ENCODE measurements at regions of chr2 and their contacts with region 1.

Region 1: DNA sequence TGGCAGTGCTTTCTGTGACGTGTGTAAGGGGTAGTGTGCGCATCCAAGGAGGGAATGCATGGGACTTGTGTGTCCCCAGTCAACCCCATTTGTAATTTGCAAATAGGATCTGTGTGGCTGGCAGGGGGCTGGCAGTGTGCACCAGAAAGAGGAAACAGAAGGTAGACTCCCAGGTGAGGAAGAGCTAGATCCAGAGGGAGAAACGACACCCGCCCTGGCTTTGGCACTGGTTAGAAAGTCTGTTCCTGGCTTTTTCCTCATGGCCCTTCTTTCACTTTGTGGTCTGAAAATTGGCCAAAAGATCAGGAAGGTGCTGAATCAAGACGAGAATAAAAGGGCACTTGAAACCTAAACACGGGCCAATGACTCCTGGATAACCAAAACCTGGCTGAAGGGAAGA is 33.3 kb downstream of the PRKCE start:
- DNase-seq: no peak
- H3K4me3 ChIP-seq: no peak overlapping the region
- H3K27ac ChIP-seq: no peak overlapping the region
- H3K4me1 ChIP-seq: peaks cover 8 to 25% of the 10 kb centered on the region in 2 experiments
- H3K27me3 ChIP-seq: no peaks in the 10 kb centered on the region
- CTCF ChIP-seq: no peak
- EP300 ChIP-seq: no peak
- RAD21 ChIP-seq: no peak

Region 2: DNA sequence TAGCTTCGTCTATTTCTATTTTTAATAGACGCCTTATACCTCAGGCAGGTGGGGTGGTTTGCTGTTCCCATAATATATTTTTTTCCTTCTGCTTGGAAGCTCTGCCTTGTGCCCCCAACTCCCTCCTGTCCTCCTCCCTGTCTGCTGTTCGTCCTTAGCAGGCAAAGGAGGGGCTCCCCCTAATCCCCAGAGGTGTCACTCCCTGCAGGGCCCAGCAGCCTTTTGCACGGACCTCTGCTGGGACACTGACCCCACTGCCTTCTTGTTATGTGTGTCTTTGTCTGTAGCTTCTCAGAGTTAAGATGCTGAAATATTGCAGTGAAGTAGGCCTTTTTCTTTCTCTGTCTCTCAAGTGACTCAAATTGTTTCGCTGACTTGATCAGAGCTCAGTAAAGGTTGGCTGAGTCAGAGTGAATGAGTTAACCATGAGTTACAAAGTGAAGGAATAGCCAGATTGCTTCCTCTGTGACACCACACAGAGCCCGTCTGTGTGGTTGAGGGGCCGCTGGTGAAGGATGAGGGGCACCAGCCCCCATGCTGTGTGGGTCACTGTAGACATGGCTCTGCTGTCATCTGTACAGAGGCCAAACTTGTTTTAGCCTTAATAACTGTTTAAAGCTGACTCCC is 14.4 kb after region 1 on chr2:
- CTCF ChIA-PET with region 1: interaction called, 13 read pairs
- POLR2A ChIA-PET with region 1: interaction called, 5 read pairs
- DNase-seq: no peak
- H3K4me3 ChIP-seq: no peak overlapping the region
- H3K27ac ChIP-seq: peak overlapping the region; percentile 66 to 69; a peak in 3 of 4 replicates
- H3K4me1 ChIP-seq: peaks cover 17 to 35% of the 10 kb centered on the region in 2 experiments
- H3K27me3 ChIP-seq: no peaks in the 10 kb centered on the region
- CTCF ChIP-seq: no peak
- EP300 ChIP-seq: peak in 1 of 2 experiments; percentile 49; a peak in 2 of 4 replicates
- RAD21 ChIP-seq: no peak

Measured in SK-N-SH (cell line).